ENCODE measurements at regions of chr19 and their contacts with region 1.

Region 1: GRCh38 chr19:11435058-11435832 is at the starts of genes ODAD3 and PRKCSH:
- DNase-seq: peak; percentile 95 to 99 (median 97)
- ATAC-seq: peak; percentile 94
- H3K4me3 ChIP-seq: peak within 1 kb of the TSS; percentile 90
- H3K4me3 Mint-ChIP-seq: peak within 1 kb of the TSS; percentile 96
- H3K27ac ChIP-seq: peak within 1 kb of the TSS; percentile 58 to 83
- H3K27ac Mint-ChIP-seq: peak within 1 kb of the TSS; percentile 84
- H3K4me1 ChIP-seq: peaks cover 26% of the 10 kb centered on the region
- H3K4me1 Mint-ChIP-seq: peaks cover 21% of the 10 kb centered on the region
- H3K27me3 ChIP-seq: no peaks in the 10 kb centered on the region
- H3K27me3 Mint-ChIP-seq: no peaks in the 10 kb centered on the region
- CTCF ChIP-seq: peak; percentile 87
- total RNA-seq, gene ODAD3: not detected
- total RNA-seq, gene PRKCSH: 257 to 260 TPM

Region 2: DNA sequence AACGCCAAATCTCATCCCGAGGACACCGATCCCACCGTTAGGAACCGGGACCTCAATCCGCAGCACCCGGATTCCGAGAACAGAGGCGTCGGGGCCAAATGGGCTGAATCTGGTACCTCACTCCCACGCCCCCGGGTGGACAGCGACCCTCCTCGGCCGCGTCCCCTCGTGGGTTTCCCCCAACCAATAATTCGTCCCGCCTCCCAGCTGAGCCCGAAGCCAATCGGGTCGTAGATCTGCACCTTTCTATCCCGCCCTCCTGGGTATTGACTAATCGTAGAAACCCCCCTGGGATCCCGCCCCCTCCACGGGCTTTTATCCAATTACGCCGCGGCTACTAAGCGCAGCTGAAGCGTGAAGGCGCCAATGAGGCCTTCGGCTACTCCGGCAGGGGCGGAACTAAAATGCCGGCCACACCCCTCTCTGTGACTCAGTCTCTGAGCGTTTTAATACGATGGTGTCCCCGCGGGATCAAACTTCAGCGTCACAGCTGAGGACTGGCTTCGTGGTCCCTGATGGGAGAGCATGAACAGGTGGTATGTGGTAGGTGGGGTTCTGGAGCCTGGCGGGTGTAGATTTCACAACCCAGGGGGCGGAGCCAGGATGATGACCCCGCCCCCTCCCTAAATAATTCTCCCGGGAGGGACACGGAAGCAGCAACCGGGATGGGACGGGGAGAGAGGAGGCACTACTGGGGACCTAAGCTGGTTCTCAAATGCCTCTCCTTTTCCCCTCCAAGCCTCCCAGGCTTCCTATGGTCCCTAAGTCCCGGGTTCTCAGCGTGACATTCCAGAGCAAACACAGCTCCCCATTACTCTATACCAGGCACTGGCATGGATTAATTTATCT is 88.9 kb before region 1 on chr19 and contains the starts of genes CCDC159 and TMEM205:
- CTCF ChIA-PET with region 1: interaction called, 11 read pairs
- POLR2A ChIA-PET with region 1: interaction called, 3 read pairs
- intact Hi-C with region 1: loop called (anchors 1 kb)
- DNase-seq: peak; percentile 96 to 99 (median 98)
- ATAC-seq: peak; percentile 98
- H3K4me3 ChIP-seq: peak within 1 kb of the TSS; percentile 75
- H3K4me3 Mint-ChIP-seq: peak within 1 kb of the TSS; percentile 89
- H3K27ac ChIP-seq: peak within 1 kb of the TSS; percentile 36 to 69
- H3K27ac Mint-ChIP-seq: peak within 1 kb of the TSS; percentile 74
- H3K4me1 ChIP-seq: peaks cover 29% of the 10 kb centered on the region
- H3K4me1 Mint-ChIP-seq: peaks cover 28% of the 10 kb centered on the region
- H3K27me3 ChIP-seq: no peaks in the 10 kb centered on the region
- H3K27me3 Mint-ChIP-seq: no peaks in the 10 kb centered on the region
- CTCF ChIP-seq: no peak
- total RNA-seq, gene CCDC159: 35.5 to 42.4 TPM
- total RNA-seq, gene TMEM205: 8.8 to 10.4 TPM

Region 3: DNA sequence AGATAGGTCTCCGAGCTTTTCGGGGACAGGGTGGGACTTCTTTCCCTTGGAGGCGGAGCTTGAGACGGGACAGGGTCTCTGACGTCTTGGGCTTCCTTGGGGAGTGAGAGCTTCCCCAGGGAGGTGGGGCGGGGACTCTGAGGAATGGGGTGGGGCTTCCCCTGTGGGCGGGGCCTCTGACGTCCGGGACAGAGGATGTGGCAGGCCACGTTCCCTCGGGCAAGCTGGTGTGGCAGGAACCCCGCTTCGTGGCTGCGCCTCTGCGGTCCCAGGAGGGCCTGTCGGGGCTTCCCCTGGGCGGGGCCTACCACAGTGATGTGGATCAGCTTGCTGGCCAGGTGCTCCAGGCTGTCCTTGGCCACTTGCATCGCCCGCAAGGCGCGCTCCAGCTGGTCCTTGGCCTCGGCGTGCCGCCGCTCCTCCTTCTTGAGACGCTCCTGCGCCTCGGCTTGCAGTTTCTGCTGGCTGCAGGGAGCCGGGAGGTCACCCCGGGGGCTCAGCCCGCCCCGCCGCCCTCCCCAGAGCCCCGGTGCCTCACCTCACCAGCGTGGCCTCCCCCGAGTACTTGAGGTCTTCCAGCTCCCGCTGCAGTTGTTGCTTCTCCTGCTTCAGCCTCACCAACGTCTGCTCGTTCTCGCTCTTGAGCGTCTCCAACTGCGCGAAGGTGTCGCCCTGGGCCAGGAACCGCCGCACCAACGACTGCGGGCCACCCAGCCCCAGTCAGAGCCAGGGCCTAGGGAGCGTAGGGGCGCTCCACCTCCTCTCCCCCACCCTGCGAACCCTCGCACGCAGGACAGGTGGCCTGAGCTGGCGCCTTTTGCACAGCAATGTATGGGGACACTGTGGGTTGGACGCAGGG is 12.9 kb before region 1 on chr19:
- CTCF ChIA-PET with region 1: interaction called, 12 read pairs
- POLR2A ChIA-PET with region 1: interaction called, 15 read pairs
- intact Hi-C with region 1: no loop called
- DNase-seq: peak; percentile 24 to 85 (median 48)
- ATAC-seq: peak; percentile 59
- H3K4me3 ChIP-seq: peak overlapping the region; percentile 37
- H3K4me3 Mint-ChIP-seq: peak overlapping the region; percentile 83
- H3K27ac ChIP-seq: no peak overlapping the region
- H3K27ac Mint-ChIP-seq: no peak overlapping the region
- H3K4me1 ChIP-seq: peaks cover 52% of the 10 kb centered on the region
- H3K4me1 Mint-ChIP-seq: peaks cover 43% of the 10 kb centered on the region
- H3K27me3 ChIP-seq: peaks cover 51 to 57% of the 10 kb centered on the region in 2 experiments
- H3K27me3 Mint-ChIP-seq: peaks cover 62% of the 10 kb centered on the region
- CTCF ChIP-seq: no peak